Panc1 (cell line): ENCODE measurements at regions of chr11 and their contacts with region 1.

Region 1: GRCh38 chr11:6473481-6474422 is at the start of gene TRIM3:
- DNase-seq: peak; percentile 64
- ATAC-seq: peak; percentile 92
- H3K4me3 ChIP-seq: peak within 1 kb of the TSS; percentile 77 to 93
- H3K27ac ChIP-seq: peak within 1 kb of the TSS; percentile 91
- H3K4me1 ChIP-seq: peaks cover 23% of the 10 kb centered on the region
- H3K27me3 ChIP-seq: no peaks in the 10 kb centered on the region
- CTCF ChIP-seq: peak; percentile 80
- total RNA-seq, gene TRIM3: 35.4 TPM

Region 2: DNA sequence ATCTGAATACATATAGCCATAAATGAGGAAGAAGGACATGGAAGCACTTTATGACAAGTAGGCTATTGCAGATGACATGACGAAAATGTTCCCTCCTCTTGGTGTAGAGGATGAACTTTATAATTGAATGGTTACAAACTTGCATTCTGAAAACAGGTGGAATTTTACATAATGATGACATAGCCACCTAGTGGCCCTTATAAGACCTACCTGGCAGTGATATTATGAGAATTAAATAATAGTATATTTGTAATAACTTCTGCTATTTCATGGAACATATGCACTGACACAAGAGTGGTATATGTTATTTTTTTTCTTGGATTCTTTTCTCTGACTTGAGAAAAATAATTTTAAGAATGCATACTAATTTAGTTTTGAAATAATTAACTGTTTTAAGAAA is 761.2 kb before region 1 on chr11:
- CTCF ChIA-PET with region 1: no interaction called
- POLR2A ChIA-PET with region 1: no interaction called
- in situ Hi-C with region 1: no loop called
- intact Hi-C with region 1: no loop called
- DNase-seq: no peak
- ATAC-seq: peak; percentile 73
- H3K4me3 ChIP-seq: no peak overlapping the region
- H3K27ac ChIP-seq: no peak overlapping the region
- H3K4me1 ChIP-seq: no peaks in the 10 kb centered on the region
- H3K27me3 ChIP-seq: peaks cover 12% of the 10 kb centered on the region
- CTCF ChIP-seq: peak; percentile 73

Region 3: DNA sequence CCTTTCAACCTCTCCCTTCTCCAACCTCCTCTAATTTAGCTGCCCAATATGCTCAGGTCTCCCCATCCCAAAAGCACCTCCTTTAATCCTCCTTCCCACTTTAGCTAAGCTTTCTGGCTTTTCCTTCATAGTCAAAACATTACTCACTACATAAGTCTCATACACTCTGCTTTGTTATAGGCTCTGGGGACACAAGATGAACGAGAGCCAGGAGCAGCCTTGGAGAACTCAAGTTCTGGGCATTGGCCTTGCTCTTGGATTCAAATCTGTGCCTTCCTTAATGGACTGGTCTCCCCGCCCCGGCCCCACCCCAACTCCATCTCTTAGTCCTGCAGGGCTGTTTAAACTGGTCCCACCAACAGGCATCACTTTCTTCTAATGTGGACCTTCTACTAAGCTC is 21.5 kb before region 1 on chr11:
- CTCF ChIA-PET with region 1: no interaction called
- POLR2A ChIA-PET with region 1: no interaction called
- in situ Hi-C with region 1: no loop called
- intact Hi-C with region 1: no loop called
- DNase-seq: no peak
- ATAC-seq: no peak
- H3K4me3 ChIP-seq: no peak overlapping the region
- H3K27ac ChIP-seq: no peak overlapping the region
- H3K4me1 ChIP-seq: no peaks in the 10 kb centered on the region
- H3K27me3 ChIP-seq: no peaks in the 10 kb centered on the region
- CTCF ChIP-seq: no peak

Region 4: DNA sequence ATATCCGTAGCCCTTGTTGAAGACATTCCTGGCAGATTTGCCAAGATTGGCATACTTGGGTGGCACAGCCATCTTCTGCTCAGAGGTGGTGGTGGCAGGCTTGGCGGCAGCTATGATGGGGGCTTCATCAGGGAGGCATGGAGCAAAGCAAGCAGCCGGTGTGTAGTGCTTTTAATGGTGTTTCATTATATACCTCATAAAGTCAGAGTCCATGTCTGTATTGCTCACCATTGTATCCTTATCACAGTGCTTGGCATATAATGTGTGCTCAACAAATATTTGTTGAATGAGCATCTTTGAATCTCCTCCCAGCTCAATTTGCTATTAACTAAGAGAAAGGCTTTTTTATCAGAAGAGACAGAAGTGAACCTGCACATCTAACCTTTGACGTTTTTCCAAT is 15.6 kb after region 1 on chr11:
- CTCF ChIA-PET with region 1: no interaction called
- POLR2A ChIA-PET with region 1: interaction called, 15 read pairs
- in situ Hi-C with region 1: no loop called
- intact Hi-C with region 1: no loop called
- DNase-seq: no peak
- ATAC-seq: no peak
- H3K4me3 ChIP-seq: no peak overlapping the region
- H3K27ac ChIP-seq: no peak overlapping the region
- H3K4me1 ChIP-seq: no peaks in the 10 kb centered on the region
- H3K27me3 ChIP-seq: no peaks in the 10 kb centered on the region
- CTCF ChIP-seq: no peak

Region 5: DNA sequence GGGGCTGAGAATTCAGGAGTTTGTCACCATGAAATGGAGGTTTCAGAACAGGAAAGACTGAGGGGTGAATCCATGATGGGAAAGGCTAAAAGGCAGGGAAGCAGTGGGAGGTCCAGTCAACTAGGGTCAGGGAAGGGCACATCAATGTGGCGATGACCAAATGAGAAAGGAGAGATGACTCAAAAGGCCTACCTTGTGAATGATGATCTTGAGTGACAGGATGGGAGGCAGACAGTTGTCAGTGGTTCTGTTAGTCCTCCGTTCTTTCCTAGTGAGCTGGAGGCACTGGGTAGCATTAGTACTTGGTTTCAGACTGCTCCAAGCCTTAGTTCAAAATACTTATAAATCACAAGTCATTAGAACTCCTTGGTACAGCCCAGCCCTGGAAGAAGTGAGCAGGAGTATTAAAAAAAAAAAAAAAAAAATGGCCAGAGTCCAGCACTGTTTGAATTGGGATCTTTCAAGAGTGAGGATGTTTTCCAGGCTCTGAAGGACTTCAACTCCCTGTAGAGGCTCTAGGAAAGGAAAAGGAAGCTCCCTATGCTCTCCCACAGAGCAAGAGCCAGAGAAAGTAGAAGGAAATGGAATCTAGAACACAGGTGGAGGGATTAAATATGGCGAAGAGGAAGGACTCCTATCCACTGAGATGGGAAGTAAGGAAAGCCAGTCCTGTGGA is 190.2 kb after region 1 on chr11:
- CTCF ChIA-PET with region 1: no interaction called
- POLR2A ChIA-PET with region 1: interaction called, 10 read pairs
- in situ Hi-C with region 1: no loop called
- intact Hi-C with region 1: no loop called
- DNase-seq: no peak
- ATAC-seq: no peak
- H3K4me3 ChIP-seq: no peak overlapping the region
- H3K27ac ChIP-seq: no peak overlapping the region
- H3K4me1 ChIP-seq: no peaks in the 10 kb centered on the region
- H3K27me3 ChIP-seq: peaks cover 4% of the 10 kb centered on the region; the same call in 1 of the 2 replicates
- CTCF ChIP-seq: no peak